OCI-LY7 (cell line): ENCODE measurements at regions of chr1 and their contacts with region 1.

Region 1: DNA sequence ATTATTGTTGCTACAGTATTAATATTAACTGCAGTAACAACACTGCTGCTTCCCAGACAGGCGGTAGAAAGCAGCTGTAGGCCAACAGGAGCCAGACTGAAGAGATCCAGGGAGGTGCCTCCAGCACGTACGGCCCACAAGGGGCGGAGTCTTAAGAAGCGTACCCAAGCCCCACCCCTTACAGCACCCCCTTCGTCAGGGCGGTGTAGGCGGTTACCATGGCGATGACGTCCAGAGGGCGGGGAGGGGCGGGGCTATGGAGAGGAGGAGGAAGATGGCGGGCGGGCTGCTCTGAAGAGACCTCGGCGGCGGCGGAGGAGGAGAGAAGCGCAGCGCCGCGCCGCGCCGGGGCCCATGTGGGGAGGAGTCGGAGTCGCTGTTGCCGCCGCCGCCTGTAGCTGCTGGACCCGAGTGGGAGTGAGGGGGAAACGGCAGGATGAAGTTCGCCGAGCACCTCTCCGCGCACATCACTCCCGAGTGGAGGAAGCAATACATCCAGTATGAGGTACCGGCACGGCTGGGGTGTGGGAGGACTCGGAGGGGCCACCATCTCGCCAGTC is at the start of gene XPR1:
- DNase-seq: peak; percentile 99
- H3K4me3 ChIP-seq: peak within 1 kb of the TSS; percentile 82
- H3K27ac ChIP-seq: peak within 1 kb of the TSS; percentile 76
- H3K4me1 ChIP-seq: peaks cover 25% of the 10 kb centered on the region
- CTCF ChIP-seq: peak; percentile 43; the same call in 1 of the 2 replicates
- total RNA-seq, gene XPR1: 8.6 and 9.0 TPM in 2 replicates

Region 2: DNA sequence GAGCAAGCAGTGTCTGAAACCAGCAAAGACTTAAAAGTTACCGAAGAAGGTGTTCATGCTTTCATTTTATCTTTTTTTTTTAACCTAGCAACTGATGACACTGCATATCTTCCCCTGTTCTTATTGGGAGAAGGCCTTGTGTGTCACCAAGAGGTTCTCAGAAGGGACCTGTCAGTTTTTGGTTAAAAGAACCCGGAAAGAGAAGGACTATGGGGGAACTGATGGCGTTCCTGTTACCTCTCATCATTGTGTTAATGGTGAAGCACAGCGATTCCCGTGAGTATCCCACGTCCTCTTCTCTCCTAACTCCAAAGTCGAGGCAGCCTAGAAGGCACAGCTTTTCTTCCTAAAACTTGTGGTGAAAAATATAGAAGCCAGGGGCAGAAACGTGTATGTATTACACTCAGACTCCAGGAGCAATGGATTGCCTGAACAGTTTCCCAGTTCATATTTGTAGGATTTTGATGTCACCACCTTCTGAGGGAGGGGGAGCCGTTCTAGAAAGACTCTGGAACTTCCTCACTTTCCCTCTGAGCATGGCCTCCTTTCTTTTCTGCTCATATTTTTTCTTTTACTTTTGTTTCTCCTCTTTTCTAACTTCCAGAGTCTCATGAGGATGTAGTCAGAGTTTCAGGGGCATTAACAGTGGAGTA is 402.1 kb after region 1 on chr1 and contains the start of gene MR1:
- CTCF ChIA-PET with region 1: no interaction called
- POLR2A ChIA-PET with region 1: interaction called, 3 read pairs
- intact Hi-C with region 1: loop called (anchors 1 kb)
- DNase-seq: peak; percentile 93
- H3K4me3 ChIP-seq: peak within 1 kb of the TSS; percentile 81
- H3K27ac ChIP-seq: peak within 1 kb of the TSS; percentile 53
- H3K4me1 ChIP-seq: peaks cover 19% of the 10 kb centered on the region
- CTCF ChIP-seq: no peak
- total RNA-seq, gene MR1: 5.9 and 7.9 TPM in 2 replicates